ENCODE measurements at regions of chr3 and their contacts with region 1.

Region 1: DNA sequence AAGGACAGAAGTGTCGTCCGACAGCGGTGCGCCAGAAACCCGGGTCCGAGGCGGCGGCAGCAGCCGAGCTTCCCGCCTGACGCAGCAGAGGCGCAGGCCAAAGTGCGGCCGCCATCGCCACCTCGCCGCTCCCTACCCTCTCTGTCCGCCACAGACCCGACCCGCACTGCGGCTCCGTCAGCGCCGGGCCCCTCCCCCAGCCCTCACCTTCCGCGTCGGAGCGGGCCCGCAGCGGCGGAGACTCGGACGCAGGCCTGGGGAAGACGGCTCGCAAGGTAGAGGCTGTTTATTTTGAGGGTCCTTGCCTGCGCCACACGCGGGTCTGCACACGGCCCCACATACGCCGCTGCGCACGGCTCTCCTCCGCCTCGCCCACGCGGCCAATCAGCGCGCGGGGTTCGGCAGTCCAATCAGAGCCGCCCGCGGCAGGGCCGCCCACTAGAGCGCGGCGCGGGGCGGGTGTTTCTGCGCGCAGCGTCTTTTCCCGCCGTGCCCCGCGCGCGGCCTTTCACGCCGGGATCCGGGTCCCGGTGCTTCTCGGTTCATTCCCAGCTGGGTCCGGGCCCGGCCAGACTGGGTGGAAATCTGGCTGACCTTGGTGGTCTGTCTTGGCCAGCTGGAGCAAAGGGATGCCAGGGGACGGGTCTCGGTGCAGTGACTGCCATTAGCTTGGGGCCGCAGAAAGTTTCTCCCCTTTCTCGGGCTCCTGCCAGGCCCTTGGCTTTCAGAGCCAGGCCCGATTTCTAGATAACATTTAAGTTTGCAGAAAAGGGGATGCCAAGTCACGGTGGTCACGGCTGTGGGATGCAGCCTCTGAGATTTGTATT is at the start of gene CNBP:
- DNase-seq: peak; percentile 95
- H3K4me3 Mint-ChIP-seq: peak within 1 kb of the TSS; percentile 84
- H3K27ac Mint-ChIP-seq: peak within 1 kb of the TSS; percentile 96
- H3K4me1 Mint-ChIP-seq: peaks cover 13% of the 10 kb centered on the region
- H3K27me3 Mint-ChIP-seq: no peaks in the 10 kb centered on the region
- CTCF ChIP-seq: no peak
- total RNA-seq, gene CNBP: 519 and 557 TPM in 2 replicates

Region 2: GRCh38 chr3:129160891-129161859 is 22.6 kb before region 1 on chr3 and contains the start of gene ISY1:
- CTCF ChIA-PET with region 1: interaction called, 16 read pairs
- POLR2A ChIA-PET with region 1: interaction called, 82 read pairs
- intact Hi-C with region 1: no loop called
- DNase-seq: peak; percentile 96
- H3K4me3 Mint-ChIP-seq: peak within 1 kb of the TSS; percentile 98
- H3K27ac Mint-ChIP-seq: peak within 1 kb of the TSS; percentile 100
- H3K4me1 Mint-ChIP-seq: peaks cover 31% of the 10 kb centered on the region
- H3K27me3 Mint-ChIP-seq: no peaks in the 10 kb centered on the region
- CTCF ChIP-seq: peak; percentile 60
- total RNA-seq, gene ISY1: 52.5 and 57.8 TPM in 2 replicates

Region 3: GRCh38 chr3:129195731-129196256 is 12.0 kb after region 1 on chr3:
- CTCF ChIA-PET with region 1: interaction called, 9 read pairs
- POLR2A ChIA-PET with region 1: interaction called, 186 read pairs
- intact Hi-C with region 1: no loop called
- DNase-seq: peak; percentile 83
- H3K4me3 Mint-ChIP-seq: peak overlapping the region; percentile 50
- H3K27ac Mint-ChIP-seq: peak overlapping the region; percentile 57
- H3K4me1 Mint-ChIP-seq: peaks cover 9% of the 10 kb centered on the region
- H3K27me3 Mint-ChIP-seq: no peaks in the 10 kb centered on the region
- CTCF ChIP-seq: no peak

Region 4: GRCh38 chr3:129224984-129225393 is 41.2 kb after region 1 on chr3:
- CTCF ChIA-PET with region 1: interaction called, 4 read pairs
- POLR2A ChIA-PET with region 1: interaction called, 81 read pairs
- intact Hi-C with region 1: no loop called
- DNase-seq: peak; percentile 91
- H3K4me3 Mint-ChIP-seq: peak overlapping the region; percentile 41
- H3K27ac Mint-ChIP-seq: peak overlapping the region; percentile 80
- H3K4me1 Mint-ChIP-seq: peaks cover 23% of the 10 kb centered on the region
- H3K27me3 Mint-ChIP-seq: no peaks in the 10 kb centered on the region
- CTCF ChIP-seq: no peak

Region 5: GRCh38 chr3:129238945-129239706 is 55.3 kb after region 1 on chr3:
- CTCF ChIA-PET with region 1: interaction called, 32 read pairs
- POLR2A ChIA-PET with region 1: interaction called, 217 read pairs
- intact Hi-C with region 1: no loop called
- DNase-seq: peak; percentile 77
- H3K4me3 Mint-ChIP-seq: peak overlapping the region; percentile 54
- H3K27ac Mint-ChIP-seq: peak overlapping the region; percentile 96
- H3K4me1 Mint-ChIP-seq: peaks cover 19% of the 10 kb centered on the region
- H3K27me3 Mint-ChIP-seq: no peaks in the 10 kb centered on the region
- CTCF ChIP-seq: no peak